ENCODE measurements at regions of chrX and their contacts with region 1.

Region 1: GRCh38 chrX:48761674-48762471 is at the start of gene GLOD5:
- DNase-seq: peak in 3 of 14 experiments; percentile 2 to 13 (median 6)
- ATAC-seq: no peak
- H3K4me3 ChIP-seq: no peak within 1 kb of the TSS
- H3K4me3 Mint-ChIP-seq: no peak within 1 kb of the TSS
- H3K27ac ChIP-seq: no peak within 1 kb of the TSS
- H3K27ac Mint-ChIP-seq: no peak within 1 kb of the TSS
- H3K4me1 ChIP-seq: peaks cover 7% of the 10 kb centered on the region
- H3K4me1 Mint-ChIP-seq: peaks cover 5% of the 10 kb centered on the region
- H3K27me3 ChIP-seq: no peaks in the 10 kb centered on the region
- H3K27me3 Mint-ChIP-seq: no peaks in the 10 kb centered on the region
- CTCF ChIP-seq: no peak
- total RNA-seq, gene GLOD5: not detected

Region 2: DNA sequence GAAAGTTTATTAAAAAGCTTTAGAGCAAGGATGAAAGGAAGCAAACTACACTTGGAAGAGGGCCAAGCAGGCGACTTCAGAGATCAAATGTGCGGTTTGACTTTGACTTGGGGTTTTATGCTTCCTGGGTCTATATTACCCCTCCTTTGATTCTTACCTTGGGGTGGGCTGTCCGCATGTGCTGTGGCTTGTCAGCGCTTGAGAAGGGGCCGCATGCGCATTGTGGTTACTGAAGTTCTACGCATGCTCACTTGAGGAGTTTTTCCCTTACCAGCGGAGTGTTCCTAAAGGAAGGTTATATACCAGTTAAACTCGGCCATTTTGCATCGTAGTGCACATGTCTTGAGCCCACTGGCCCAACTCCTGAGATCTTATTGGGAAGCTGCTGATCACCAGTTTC is 1381.6 kb before region 1 on chrX:
- CTCF ChIA-PET with region 1: no interaction called
- POLR2A ChIA-PET with region 1: no interaction called
- intact Hi-C with region 1: no loop called
- DNase-seq: peak; percentile 49 to 92 (median 64)
- ATAC-seq: peak; percentile 88
- H3K4me3 ChIP-seq: peak overlapping the region; percentile 34
- H3K4me3 Mint-ChIP-seq: peak overlapping the region; percentile 74
- H3K27ac ChIP-seq: no peak overlapping the region
- H3K27ac Mint-ChIP-seq: peak overlapping the region; percentile 82
- H3K4me1 ChIP-seq: peaks cover 16% of the 10 kb centered on the region
- H3K4me1 Mint-ChIP-seq: peaks cover 29% of the 10 kb centered on the region
- H3K27me3 ChIP-seq: no peaks in the 10 kb centered on the region
- H3K27me3 Mint-ChIP-seq: no peaks in the 10 kb centered on the region
- CTCF ChIP-seq: no peak

Region 3: GRCh38 chrX:48772602-48773001 is 10.7 kb after region 1 on chrX:
- CTCF ChIA-PET with region 1: no interaction called
- POLR2A ChIA-PET with region 1: no interaction called
- intact Hi-C with region 1: loop called in 1 of 2 experiments (anchors 1 kb)
- DNase-seq: no peak
- ATAC-seq: no peak
- H3K4me3 ChIP-seq: no peak overlapping the region
- H3K4me3 Mint-ChIP-seq: no peak overlapping the region
- H3K27ac ChIP-seq: no peak overlapping the region
- H3K27ac Mint-ChIP-seq: no peak overlapping the region
- H3K4me1 ChIP-seq: no peaks in the 10 kb centered on the region
- H3K4me1 Mint-ChIP-seq: no peaks in the 10 kb centered on the region
- H3K27me3 ChIP-seq: no peaks in the 10 kb centered on the region
- H3K27me3 Mint-ChIP-seq: no peaks in the 10 kb centered on the region
- CTCF ChIP-seq: no peak